H1 (cell line): ENCODE measurements at regions of chr1 and their contacts with region 1.

Region 1: GRCh38 chr1:147389532-147390524 is 147.3 kb downstream of the CHD1L start:
- DNase-seq: peak; percentile 15 to 62
- H3K4me3 ChIP-seq: no peak overlapping the region
- H3K27ac ChIP-seq: no peak overlapping the region
- H3K4me1 ChIP-seq: peaks cover 0 to 4% (median 0%) of the 10 kb centered on the region in 4 experiments; a peak in 3 of 7 replicates
- H3K27me3 ChIP-seq: no peaks in the 10 kb centered on the region
- CTCF ChIP-seq: peak in 2 of 3 experiments; percentile 75 to 82; a peak in 3 of 4 replicates
- EP300 ChIP-seq: no peak
- POLR2A ChIP-seq: no peak
- RAD21 ChIP-seq: peak; percentile 83 to 89

Region 2: DNA sequence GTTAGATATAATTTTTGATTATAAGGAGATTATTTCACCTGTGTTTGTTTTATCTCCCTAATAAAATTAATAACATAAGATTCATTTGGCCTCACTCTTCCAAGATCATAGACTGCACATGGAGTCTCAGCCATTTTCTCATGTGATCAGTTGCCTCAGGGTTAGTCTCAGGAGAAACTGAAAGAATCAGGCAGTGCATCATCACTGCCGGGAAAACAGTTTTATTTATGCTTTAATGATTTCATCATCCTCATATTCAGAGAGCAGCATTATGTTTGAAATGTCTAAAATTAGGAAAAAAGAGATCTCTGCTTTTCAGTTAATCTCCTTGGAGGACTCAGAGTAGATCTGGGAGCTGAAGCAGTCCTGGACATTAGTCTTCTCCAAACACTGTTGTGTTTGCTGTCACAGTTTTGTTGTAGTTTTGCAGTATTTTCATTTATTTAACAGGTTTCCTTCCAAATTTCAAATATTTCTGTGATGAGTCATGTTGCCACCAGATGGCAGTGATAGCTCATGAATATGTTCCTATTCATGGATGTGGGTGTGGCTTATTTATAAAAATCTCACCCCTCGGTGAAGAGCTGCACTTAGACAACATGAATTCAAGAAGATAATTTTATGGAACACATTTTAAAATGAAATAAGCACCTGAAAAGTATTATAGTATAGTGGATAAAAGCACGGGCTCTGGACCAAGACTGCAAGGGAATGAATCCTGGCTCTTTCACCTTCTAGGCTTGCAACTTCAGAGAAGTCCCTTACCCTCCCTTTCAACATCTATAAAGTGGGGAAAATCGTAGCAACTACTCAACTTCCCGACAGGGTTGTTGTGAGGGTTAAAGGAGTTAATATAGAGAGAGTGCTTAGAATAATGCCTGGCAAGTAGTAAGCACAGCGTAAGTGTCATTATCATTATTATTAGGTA is 116.2 kb before region 1 on chr1:
- CTCF ChIA-PET with region 1: interaction called, 35 read pairs
- POLR2A ChIA-PET with region 1: interaction called, 4 read pairs
- DNase-seq: no peak
- H3K4me3 ChIP-seq: no peak overlapping the region
- H3K27ac ChIP-seq: no peak overlapping the region
- H3K4me1 ChIP-seq: no peaks in the 10 kb centered on the region
- H3K27me3 ChIP-seq: no peaks in the 10 kb centered on the region
- CTCF ChIP-seq: peak in 2 of 3 experiments; percentile 52 to 53; a peak in 2 of 4 replicates
- EP300 ChIP-seq: no peak
- POLR2A ChIP-seq: no peak
- RAD21 ChIP-seq: peak; percentile 80

Region 3: GRCh38 chr1:147337040-147337630 is 52.7 kb before region 1 on chr1:
- CTCF ChIA-PET with region 1: interaction called, 14 read pairs
- POLR2A ChIA-PET with region 1: no interaction called
- DNase-seq: peak in 1 of 2 experiments; percentile 74
- H3K4me3 ChIP-seq: peak overlapping the region in 1 of 4 experiments; percentile 31; a peak in 3 of 8 replicates
- H3K27ac ChIP-seq: no peak overlapping the region
- H3K4me1 ChIP-seq: peaks cover 0 to 4% (median 2%) of the 10 kb centered on the region in 4 experiments; a peak in 3 of 7 replicates
- H3K27me3 ChIP-seq: no peaks in the 10 kb centered on the region
- CTCF ChIP-seq: no peak
- EP300 ChIP-seq: peak in 1 of 2 experiments; percentile 87; a peak in 2 of 3 replicates
- POLR2A ChIP-seq: no peak
- RAD21 ChIP-seq: no peak

Region 4: DNA sequence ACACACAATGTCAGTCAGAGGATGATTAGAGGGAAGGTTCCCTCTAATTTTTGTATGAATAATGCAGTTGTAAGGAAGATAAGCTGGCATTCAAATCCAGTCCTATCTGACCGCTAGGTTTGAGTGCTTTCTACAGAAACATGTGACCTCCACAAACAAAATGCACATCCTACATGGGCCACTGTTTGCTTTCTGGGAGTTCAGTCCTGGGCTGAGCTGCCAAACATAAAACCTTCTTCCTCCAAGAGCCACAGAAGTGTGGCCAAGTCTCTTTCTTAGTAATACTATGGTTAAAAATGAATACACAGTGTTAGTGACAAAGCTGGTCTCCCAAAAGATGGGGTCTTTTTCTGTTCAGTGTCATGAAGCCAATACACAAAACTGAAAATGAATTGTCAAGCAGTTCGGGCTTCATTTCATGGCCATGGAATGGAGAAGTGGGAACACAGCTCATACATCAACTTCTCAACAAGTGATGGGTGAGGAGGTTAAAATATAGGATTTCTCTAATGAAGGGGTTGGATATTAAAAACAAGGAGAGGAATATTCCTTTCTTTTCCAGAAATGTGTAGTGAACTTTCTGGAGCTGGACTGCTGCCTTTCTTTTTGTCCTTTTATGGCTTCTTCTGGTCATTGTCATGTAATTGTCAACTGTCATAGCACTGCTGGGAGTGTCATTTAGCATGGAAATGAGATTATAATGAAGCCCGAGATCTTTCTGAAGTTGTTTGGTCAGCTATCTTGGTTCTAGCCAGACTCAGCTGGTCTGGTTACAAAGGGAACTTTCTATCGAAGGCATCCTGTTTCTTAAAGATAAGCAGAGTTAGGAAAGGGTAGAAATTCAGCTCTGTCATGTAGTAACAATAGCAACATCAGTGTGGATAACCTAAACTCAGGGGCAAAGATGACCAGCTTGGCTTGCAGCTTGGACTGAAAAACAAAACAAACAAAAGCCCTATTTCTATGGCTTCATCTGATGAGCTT is 12.3 kb before region 1 on chr1:
- CTCF ChIA-PET with region 1: interaction called, 45 read pairs
- POLR2A ChIA-PET with region 1: no interaction called
- DNase-seq: no peak
- H3K4me3 ChIP-seq: no peak overlapping the region
- H3K27ac ChIP-seq: no peak overlapping the region
- H3K4me1 ChIP-seq: no peaks in the 10 kb centered on the region
- H3K27me3 ChIP-seq: no peaks in the 10 kb centered on the region
- CTCF ChIP-seq: no peak
- EP300 ChIP-seq: no peak
- POLR2A ChIP-seq: no peak
- RAD21 ChIP-seq: no peak

Region 5: DNA sequence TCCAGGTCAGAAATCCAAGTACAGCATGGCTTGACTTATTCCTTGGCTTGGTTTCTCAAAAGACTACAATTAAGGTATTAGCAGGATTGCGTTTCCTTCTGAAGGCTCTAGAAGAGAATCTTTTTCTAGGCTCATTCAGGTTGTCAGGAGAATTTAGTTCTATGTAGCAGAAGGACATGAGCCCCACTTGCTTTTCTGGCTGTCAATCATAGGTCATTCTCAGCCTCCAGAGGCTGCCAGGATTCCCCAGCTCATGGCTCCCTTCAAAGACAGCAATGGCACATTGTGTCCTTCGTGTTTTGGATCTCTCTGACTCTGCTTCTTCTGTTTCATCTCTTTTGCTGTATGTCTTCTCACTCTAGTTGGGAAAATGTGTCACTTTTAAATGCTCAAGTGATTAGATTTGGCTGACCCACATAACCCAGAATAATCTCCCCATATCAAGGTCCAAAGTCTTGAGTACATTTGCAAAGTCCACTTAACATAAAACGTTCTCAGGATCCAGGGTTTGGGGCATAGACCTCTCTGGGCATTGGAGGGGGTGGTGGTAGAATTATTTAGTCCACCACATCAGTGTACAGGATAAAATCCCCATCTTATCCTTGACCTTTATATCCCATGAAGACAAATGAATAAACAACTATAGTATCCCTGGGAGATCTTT is 24.8 kb after region 1 on chr1:
- CTCF ChIA-PET with region 1: interaction called, 10 read pairs
- POLR2A ChIA-PET with region 1: no interaction called
- DNase-seq: no peak
- H3K4me3 ChIP-seq: no peak overlapping the region
- H3K27ac ChIP-seq: no peak overlapping the region
- H3K4me1 ChIP-seq: no peaks in the 10 kb centered on the region
- H3K27me3 ChIP-seq: no peaks in the 10 kb centered on the region
- CTCF ChIP-seq: no peak
- EP300 ChIP-seq: no peak
- POLR2A ChIP-seq: no peak
- RAD21 ChIP-seq: no peak

Region 6: DNA sequence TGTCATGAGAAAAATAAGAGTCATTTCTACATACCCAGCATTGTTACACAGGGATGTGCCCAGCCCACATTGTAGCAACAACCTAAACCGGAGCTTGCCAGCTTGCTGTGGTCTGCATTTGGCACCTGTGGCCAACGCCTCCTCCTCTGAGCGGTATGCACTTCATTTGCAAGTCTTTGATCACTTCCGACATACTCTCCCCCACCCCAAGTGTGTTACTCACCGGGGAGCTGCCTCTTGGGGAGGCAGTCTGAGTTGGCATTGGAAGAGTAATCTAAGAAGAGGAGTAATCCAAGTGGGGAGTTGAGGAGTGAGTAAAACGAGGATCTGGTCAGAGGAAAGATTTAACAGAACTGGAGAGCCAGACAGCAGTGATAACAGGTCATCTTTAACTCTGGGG is 155.3 kb after region 1 on chr1:
- CTCF ChIA-PET with region 1: no interaction called
- POLR2A ChIA-PET with region 1: no interaction called
- DNase-seq: peak; percentile 52 to 56
- H3K4me3 ChIP-seq: peak overlapping the region in 1 of 4 experiments; percentile 35; a peak in 1 of 8 replicates
- H3K27ac ChIP-seq: no peak overlapping the region
- H3K4me1 ChIP-seq: peaks cover 4 to 17% (median 12%) of the 10 kb centered on the region in 4 experiments; a peak in 6 of 7 replicates
- H3K27me3 ChIP-seq: no peaks in the 10 kb centered on the region
- CTCF ChIP-seq: no peak
- EP300 ChIP-seq: no peak
- POLR2A ChIP-seq: no peak
- RAD21 ChIP-seq: no peak